CD8-positive, alpha-beta T cell (primary cell): ENCODE measurements at regions of chr4 and their contacts with region 1.

Region 1: DNA sequence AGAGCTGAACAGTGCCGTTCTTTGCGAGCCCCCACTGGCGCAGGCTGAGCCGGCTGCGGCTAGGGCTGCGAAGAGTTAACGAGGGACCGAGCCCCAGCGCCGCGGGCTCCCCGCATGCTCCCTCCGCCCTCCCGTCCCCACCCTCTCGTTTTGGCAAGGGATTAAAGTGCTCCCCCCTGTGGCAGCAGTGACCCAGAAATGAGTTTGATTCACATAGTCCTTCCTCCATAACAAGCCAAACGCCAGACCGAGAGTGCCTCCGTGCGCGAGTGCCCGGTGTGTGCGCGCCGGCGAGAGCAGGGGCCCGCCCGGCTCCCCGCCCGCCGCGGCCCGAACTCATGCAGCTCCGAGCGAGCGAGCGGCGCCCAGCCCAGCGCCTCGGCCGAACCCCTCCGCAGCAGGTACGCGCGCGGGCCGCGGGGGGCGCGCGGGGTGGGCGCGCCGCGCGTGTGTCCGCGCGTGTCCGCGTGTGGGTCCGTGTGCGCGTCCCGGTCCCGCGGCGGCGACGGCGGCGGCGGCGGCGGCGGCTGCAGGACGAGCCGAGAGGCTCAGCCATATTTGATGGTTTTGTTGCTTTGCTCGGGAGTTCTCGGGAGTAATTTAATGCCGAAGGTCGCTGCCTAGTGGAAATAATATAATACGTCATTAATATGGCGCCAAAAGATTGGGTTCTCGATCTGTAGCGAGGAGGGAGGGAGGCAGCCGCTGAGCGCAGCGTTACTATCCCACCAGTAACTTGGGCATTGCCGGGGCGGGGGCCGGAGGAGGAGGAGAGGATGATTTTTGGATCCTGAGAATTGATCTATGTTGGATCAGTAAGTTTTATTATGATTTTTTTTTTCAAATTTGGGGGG is at the start of gene JADE1:
- DNase-seq: peak; percentile 82 to 95 (median 90)
- ATAC-seq: peak; percentile 58
- H3K4me3 ChIP-seq: peak within 1 kb of the TSS; percentile 80 to 93
- H3K4me3 Mint-ChIP-seq: peak within 1 kb of the TSS; percentile 97
- H3K27ac ChIP-seq: peak within 1 kb of the TSS; percentile 85 to 95
- H3K27ac Mint-ChIP-seq: peak within 1 kb of the TSS; percentile 99
- H3K4me1 ChIP-seq: peaks cover 12% of the 10 kb centered on the region
- H3K4me1 Mint-ChIP-seq: peaks cover 22% of the 10 kb centered on the region
- H3K27me3 ChIP-seq: no peaks in the 10 kb centered on the region
- H3K27me3 Mint-ChIP-seq: no peaks in the 10 kb centered on the region
- CTCF ChIP-seq: peak; percentile 43
- total RNA-seq, gene JADE1: 77.5 to 82.2 TPM

Region 2: GRCh38 chr4:127965062-127965802 is 844.5 kb before region 1 on chr4 and contains the starts of genes ABHD18 and MFSD8:
- CTCF ChIA-PET with region 1: no interaction called
- POLR2A ChIA-PET with region 1: interaction called, 6 read pairs
- intact Hi-C with region 1: loop called in 1 of 2 experiments (anchors 1 kb)
- DNase-seq: peak; percentile 96 to 100 (median 99)
- ATAC-seq: peak; percentile 85
- H3K4me3 ChIP-seq: peak within 1 kb of the TSS; percentile 92 to 98
- H3K4me3 Mint-ChIP-seq: peak within 1 kb of the TSS; percentile 94
- H3K27ac ChIP-seq: peak within 1 kb of the TSS; percentile 91 to 96
- H3K27ac Mint-ChIP-seq: peak within 1 kb of the TSS; percentile 96
- H3K4me1 ChIP-seq: peaks cover 27% of the 10 kb centered on the region
- H3K4me1 Mint-ChIP-seq: peaks cover 49% of the 10 kb centered on the region
- H3K27me3 ChIP-seq: no peaks in the 10 kb centered on the region
- H3K27me3 Mint-ChIP-seq: no peaks in the 10 kb centered on the region
- CTCF ChIP-seq: no peak
- total RNA-seq, gene ABHD18: 13.3 to 13.5 TPM
- total RNA-seq, gene MFSD8: 26.1 to 27.1 TPM

Region 3: DNA sequence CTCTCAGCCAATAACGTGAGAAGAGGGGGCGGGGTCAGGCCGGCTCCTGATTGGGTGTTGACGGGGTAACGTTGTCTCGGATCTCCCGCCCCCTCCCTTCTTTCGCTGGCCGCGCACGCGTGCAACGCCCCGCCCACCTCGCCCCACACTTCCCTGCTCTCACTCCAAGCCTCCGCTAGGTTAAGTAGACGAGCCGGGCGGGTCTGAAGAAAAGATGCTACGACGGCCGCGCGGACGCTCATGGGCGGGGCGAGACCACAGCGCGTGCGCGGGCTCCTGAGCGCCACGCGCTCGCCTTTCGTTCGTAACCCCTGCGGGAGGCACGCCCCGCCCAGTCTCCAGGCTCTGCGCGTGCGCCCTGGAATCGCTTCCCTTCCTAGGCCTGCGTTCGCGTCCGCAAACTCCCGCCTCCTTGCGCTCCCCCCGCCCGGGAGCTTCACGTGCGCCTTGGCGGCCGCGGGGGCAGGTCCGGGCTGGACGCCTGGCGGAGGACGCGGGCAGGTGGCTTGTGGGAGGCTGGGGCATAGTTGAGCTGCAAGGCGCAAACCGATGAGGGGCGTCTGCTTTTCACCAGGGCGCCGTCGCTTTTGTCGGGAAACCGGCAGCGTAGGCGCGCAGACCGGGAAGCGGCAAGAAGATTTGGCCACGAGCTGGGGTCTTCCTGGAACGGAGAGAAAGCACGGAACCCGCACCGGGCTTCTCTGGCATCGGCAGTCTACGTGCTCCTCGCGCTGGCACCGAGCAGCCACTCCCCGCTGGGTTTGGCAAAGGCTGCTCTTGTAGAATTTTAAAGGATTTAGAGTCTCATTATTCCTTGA is 521.6 kb before region 1 on chr4:
- CTCF ChIA-PET with region 1: no interaction called
- POLR2A ChIA-PET with region 1: interaction called, 6 read pairs
- intact Hi-C with region 1: loop called (anchors 1 kb)
- DNase-seq: peak; percentile 99 to 100 (median 100)
- ATAC-seq: peak; percentile 79
- H3K4me3 ChIP-seq: peak overlapping the region; percentile 69 to 91
- H3K4me3 Mint-ChIP-seq: peak overlapping the region; percentile 97
- H3K27ac ChIP-seq: peak overlapping the region; percentile 95 to 98
- H3K27ac Mint-ChIP-seq: peak overlapping the region; percentile 97
- H3K4me1 ChIP-seq: peaks cover 28% of the 10 kb centered on the region
- H3K4me1 Mint-ChIP-seq: peaks cover 45% of the 10 kb centered on the region
- H3K27me3 ChIP-seq: no peaks in the 10 kb centered on the region
- H3K27me3 Mint-ChIP-seq: no peaks in the 10 kb centered on the region
- CTCF ChIP-seq: no peak

Region 4: GRCh38 chr4:128782076-128782715 is 27.5 kb before region 1 on chr4:
- CTCF ChIA-PET with region 1: interaction called, 4 read pairs
- POLR2A ChIA-PET with region 1: interaction called, 5 read pairs
- intact Hi-C with region 1: loop called in 1 of 2 experiments (anchors 1 kb)
- DNase-seq: peak; percentile 37 to 78 (median 65)
- ATAC-seq: peak; percentile 82
- H3K4me3 ChIP-seq: no peak overlapping the region
- H3K4me3 Mint-ChIP-seq: no peak overlapping the region
- H3K27ac ChIP-seq: no peak overlapping the region
- H3K27ac Mint-ChIP-seq: no peak overlapping the region
- H3K4me1 ChIP-seq: no peaks in the 10 kb centered on the region
- H3K4me1 Mint-ChIP-seq: no peaks in the 10 kb centered on the region
- H3K27me3 ChIP-seq: no peaks in the 10 kb centered on the region
- H3K27me3 Mint-ChIP-seq: peaks cover 8% of the 10 kb centered on the region
- CTCF ChIP-seq: peak; percentile 61

Region 5: DNA sequence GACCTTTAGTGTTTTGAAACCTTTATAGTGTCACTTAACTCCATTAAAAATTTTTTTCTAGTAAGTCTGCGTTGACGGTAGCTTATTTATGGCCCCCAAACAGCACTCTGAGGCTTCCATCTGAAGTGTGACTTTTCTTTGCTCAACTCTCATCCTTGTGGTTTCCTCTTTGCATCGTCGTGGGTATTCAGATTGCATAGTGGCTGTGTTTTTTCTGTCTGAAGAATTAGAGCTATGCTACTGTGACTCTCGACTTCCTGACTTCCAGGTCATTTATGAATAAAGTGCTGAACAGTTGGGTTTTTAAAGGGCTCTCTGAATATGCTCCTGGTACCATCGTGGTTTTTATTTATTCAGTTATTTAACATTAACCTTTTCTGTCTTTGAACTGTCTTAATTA is 44.7 kb after region 1 on chr4:
- CTCF ChIA-PET with region 1: interaction called, 7 read pairs
- POLR2A ChIA-PET with region 1: interaction called, 20 read pairs
- intact Hi-C with region 1: loop called in 1 of 2 experiments (anchors 2 kb)
- DNase-seq: peak in 7 of 9 experiments; percentile 11 to 84 (median 26)
- ATAC-seq: peak; percentile 94
- H3K4me3 ChIP-seq: no peak overlapping the region
- H3K4me3 Mint-ChIP-seq: peak overlapping the region; percentile 17
- H3K27ac ChIP-seq: peak overlapping the region; percentile 24 to 64
- H3K27ac Mint-ChIP-seq: peak overlapping the region; percentile 88
- H3K4me1 ChIP-seq: peaks cover 18% of the 10 kb centered on the region
- H3K4me1 Mint-ChIP-seq: peaks cover 32% of the 10 kb centered on the region
- H3K27me3 ChIP-seq: no peaks in the 10 kb centered on the region
- H3K27me3 Mint-ChIP-seq: no peaks in the 10 kb centered on the region
- CTCF ChIP-seq: no peak